ENCODE measurements at regions of chr19 and their contacts with region 1.

Region 1: GRCh38 chr19:17993076-17993813 is 14.7 kb upstream of the ARRDC2 start:
- DNase-seq: no peak
- H3K4me3 ChIP-seq: no peak overlapping the region
- H3K27ac ChIP-seq: no peak overlapping the region
- H3K4me1 ChIP-seq: no peaks in the 10 kb centered on the region
- H3K27me3 ChIP-seq: no peaks in the 10 kb centered on the region
- CTCF ChIP-seq: no peak
- POLR2A ChIP-seq: no peak

Region 2: DNA sequence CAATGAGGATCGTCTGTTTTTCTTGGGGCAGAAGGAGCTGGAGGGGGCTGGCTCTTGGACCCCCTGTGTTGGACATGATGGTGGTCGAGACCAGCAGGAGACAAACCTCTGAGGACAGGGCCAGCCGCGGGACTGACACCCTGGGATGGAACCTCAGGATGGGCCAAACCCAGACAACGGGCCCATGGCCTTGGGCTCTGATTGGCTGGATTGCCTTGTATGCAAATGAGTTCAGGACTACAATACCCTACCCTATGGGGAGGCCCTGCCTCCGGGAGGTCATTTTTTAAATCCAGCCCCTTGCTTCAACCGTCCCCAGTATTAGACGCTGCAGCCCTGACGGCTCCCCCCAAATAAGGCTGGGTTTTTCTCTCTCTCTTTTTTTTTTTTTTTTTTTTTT is 99.5 kb before region 1 on chr19:
- CTCF ChIA-PET with region 1: no interaction called
- POLR2A ChIA-PET with region 1: no interaction called
- dilution Hi-C with region 1: no loop called
- intact Hi-C with region 1: no loop called
- DNase-seq: no peak
- H3K4me3 ChIP-seq: no peak overlapping the region
- H3K27ac ChIP-seq: no peak overlapping the region
- H3K4me1 ChIP-seq: no peaks in the 10 kb centered on the region
- H3K27me3 ChIP-seq: no peaks in the 10 kb centered on the region
- CTCF ChIP-seq: no peak
- POLR2A ChIP-seq: no peak

Region 3: GRCh38 chr19:17957149-17957849 is 35.9 kb before region 1 on chr19:
- CTCF ChIA-PET with region 1: interaction called, 20 read pairs
- POLR2A ChIA-PET with region 1: interaction called, 10 read pairs
- dilution Hi-C with region 1: no loop called
- intact Hi-C with region 1: no loop called
- DNase-seq: no peak
- H3K4me3 ChIP-seq: no peak overlapping the region
- H3K27ac ChIP-seq: no peak overlapping the region
- H3K4me1 ChIP-seq: no peaks in the 10 kb centered on the region
- H3K27me3 ChIP-seq: peaks cover 18 to 24% of the 10 kb centered on the region in 2 experiments
- CTCF ChIP-seq: no peak
- POLR2A ChIP-seq: no peak

Region 4: DNA sequence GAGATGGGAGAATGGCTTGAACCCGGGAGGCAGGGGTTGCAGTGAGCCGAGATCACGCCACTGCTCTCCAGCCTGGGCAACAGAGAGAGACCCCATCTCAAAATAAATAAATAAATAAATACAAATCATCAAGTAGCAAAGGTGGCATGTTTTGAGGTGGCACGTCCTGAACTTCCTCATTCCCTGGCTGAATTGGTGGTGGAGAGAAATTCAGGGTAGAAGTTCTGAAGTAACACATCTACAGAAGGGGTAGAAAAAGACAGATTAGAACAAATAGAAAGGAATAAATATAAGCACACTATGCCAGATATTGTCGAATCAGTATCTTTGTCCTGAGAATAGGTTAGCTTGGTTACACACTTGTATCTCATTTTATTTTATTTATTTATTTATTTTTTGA is 186.7 kb after region 1 on chr19:
- CTCF ChIA-PET with region 1: no interaction called
- POLR2A ChIA-PET with region 1: no interaction called
- dilution Hi-C with region 1: no loop called
- intact Hi-C with region 1: no loop called
- DNase-seq: no peak
- H3K4me3 ChIP-seq: no peak overlapping the region
- H3K27ac ChIP-seq: no peak overlapping the region
- H3K4me1 ChIP-seq: no peaks in the 10 kb centered on the region
- H3K27me3 ChIP-seq: peaks cover 0 to 2% of the 10 kb centered on the region in 2 experiments
- CTCF ChIP-seq: no peak
- POLR2A ChIP-seq: no peak